ENCODE measurements at regions of chr1 and their contacts with region 1.

Region 1: GRCh38 chr1:178532392-178532791 is 19.5 kb downstream of the TEX35 start:
- DNase-seq: no peak
- H3K4me3 ChIP-seq: no peak overlapping the region
- H3K27ac ChIP-seq: no peak overlapping the region
- H3K4me1 ChIP-seq: peaks cover 9 to 18% (median 13%) of the 10 kb centered on the region in 4 donors
- H3K27me3 ChIP-seq: no peaks in the 10 kb centered on the region
- CTCF ChIP-seq: peak; percentile 78 to 89 (median 87)
- EP300 ChIP-seq: no peak
- POLR2A ChIP-seq: no peak

Region 2: DNA sequence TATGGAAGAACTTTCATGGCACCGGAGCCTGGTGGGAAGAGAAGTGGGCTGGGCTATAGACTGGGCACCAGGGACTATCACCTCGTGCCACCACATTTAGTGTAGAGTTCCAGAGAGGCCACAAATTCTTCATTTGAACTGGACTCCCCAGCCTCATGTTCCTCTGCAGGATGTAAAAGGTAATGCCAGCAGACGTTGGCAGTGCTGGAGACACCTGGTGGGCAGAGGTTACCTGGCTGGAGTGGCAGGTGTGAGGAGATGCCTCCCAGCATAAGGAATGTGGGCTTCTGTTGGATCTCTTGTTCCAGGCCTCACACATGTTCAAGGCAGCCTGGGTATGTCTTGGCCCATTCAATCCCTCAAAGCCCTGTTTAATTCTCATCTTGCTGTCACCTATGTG is 15.7 kb after region 1 on chr1:
- intact Hi-C with region 1: loop called (anchors 1 kb)
- DNase-seq: no peak
- H3K4me3 ChIP-seq: no peak overlapping the region
- H3K27ac ChIP-seq: no peak overlapping the region
- H3K4me1 ChIP-seq: peaks cover 7 to 22% (median 15%) of the 10 kb centered on the region in 4 donors
- H3K27me3 ChIP-seq: no peaks in the 10 kb centered on the region
- CTCF ChIP-seq: no peak
- EP300 ChIP-seq: no peak
- POLR2A ChIP-seq: no peak

Measured in esophagus muscularis mucosa (tissue), 4 donors.